ENCODE measurements at regions of chr13 and their contacts with region 1.

Region 1: GRCh38 chr13:75372517-75372916 is 109.5 kb downstream of the TBC1D4 start:
- DNase-seq: no peak
- H3K4me3 ChIP-seq: no peak overlapping the region
- H3K27ac ChIP-seq: peak overlapping the region; percentile 9
- H3K4me1 ChIP-seq: peaks cover 10% of the 10 kb centered on the region
- H3K27me3 ChIP-seq: no peaks in the 10 kb centered on the region
- CTCF ChIP-seq: peak in 2 of 3 experiments; percentile 63 to 73
- POLR2A ChIP-seq: no peak

Region 2: DNA sequence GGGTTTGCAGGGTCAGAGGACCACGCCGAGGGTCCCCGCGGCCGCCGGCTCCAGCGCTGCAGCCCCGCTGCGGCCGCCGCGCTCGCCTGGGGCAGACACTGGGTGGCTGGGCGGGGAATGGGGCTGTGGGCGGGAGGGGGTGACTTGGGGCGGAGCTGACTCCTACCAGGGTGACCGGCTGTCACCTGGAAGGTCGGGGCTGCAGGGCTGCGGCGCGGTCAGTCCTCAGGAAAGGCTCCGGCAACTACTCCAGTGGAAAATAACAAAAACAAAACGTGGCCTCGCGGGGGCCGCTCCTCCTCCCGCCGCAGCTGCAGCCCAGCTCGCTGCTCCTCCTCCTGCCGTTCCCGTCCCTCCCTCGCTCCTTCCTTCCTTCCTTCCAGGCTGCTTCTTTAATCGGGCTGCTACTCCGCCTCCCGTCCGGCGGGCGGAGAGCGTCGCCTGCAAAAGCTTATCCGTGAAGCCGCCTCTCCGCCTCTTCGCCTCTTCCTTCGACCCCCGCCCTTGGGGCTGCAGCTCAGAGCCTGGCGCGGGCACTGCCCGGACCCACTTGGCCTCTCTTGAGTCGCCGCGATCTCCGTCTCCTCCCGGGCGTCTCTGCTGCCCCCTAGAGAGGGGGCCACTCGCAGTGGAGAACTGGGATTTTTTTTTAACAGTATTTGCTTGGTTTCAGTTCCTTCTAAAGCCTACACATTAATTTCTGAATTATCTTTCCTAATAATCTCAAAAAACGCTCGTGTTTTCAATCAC is 109.7 kb after region 1 on chr13 and contains the start of gene TBC1D4:
- intact Hi-C with region 1: loop called (anchors 5 kb)
- DNase-seq: no peak
- H3K4me3 ChIP-seq: peak within 1 kb of the TSS; percentile 56 to 77
- H3K27ac ChIP-seq: peak within 1 kb of the TSS; percentile 72
- H3K4me1 ChIP-seq: peaks cover 23% of the 10 kb centered on the region
- H3K27me3 ChIP-seq: no peaks in the 10 kb centered on the region
- CTCF ChIP-seq: peak; percentile 16 to 77 (median 53)
- POLR2A ChIP-seq: no peak
- total RNA-seq, gene TBC1D4: 25.0 TPM

Region 3: GRCh38 chr13:75537401-75538365 is 165.2 kb after region 1 on chr13 and contains the start of gene COMMD6:
- intact Hi-C with region 1: loop called (anchors 5 kb)
- DNase-seq: no peak
- H3K4me3 ChIP-seq: peak within 1 kb of the TSS; percentile 84 to 86
- H3K27ac ChIP-seq: peak within 1 kb of the TSS; percentile 66
- H3K4me1 ChIP-seq: peaks cover 17% of the 10 kb centered on the region
- H3K27me3 ChIP-seq: no peaks in the 10 kb centered on the region
- CTCF ChIP-seq: peak; percentile 24 to 62 (median 24)
- POLR2A ChIP-seq: peak in 1 of 2 donors; percentile 8
- total RNA-seq, gene COMMD6: 211 TPM

Region 4: DNA sequence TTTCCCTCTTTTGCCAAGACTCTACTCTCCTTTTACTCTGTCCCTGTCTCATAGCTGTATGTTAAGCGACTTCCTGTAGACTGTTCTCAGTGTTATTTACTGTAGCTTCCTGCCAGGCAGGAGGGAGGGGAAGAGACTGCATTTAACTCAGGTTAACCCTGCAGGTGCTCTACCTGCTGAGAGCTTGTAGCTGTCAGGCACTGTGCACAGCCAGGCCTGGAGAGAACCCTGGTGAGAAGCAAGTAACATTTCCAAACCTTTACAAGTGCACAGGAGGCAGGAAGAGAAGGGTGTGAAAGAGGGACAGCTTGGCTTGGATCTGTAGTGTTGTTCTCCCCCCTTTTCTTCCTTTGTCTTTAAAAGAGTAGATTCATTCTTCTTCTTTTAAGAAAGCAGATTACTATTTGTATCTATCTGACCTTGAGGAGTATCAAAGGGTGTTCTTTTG is 430.7 kb after region 1 on chr13:
- intact Hi-C with region 1: no loop called
- DNase-seq: no peak
- H3K4me3 ChIP-seq: no peak overlapping the region
- H3K27ac ChIP-seq: no peak overlapping the region
- H3K4me1 ChIP-seq: no peaks in the 10 kb centered on the region
- H3K27me3 ChIP-seq: no peaks in the 10 kb centered on the region
- CTCF ChIP-seq: no peak
- POLR2A ChIP-seq: no peak

Measured in vagina (tissue), 2 donors.